ENCODE measurements at regions of chr4 and their contacts with region 1.

Region 1: GRCh38 chr4:78606530-78607095 is 55.0 kb downstream of the ANXA3 start:
- DNase-seq: no peak
- ATAC-seq: no peak

Region 2: GRCh38 chr4:78863254-78863869 is 256.7 kb after region 1 on chr4:
- intact Hi-C with region 1: loop called (anchors 1 kb)
- DNase-seq: no peak
- ATAC-seq: no peak